ENCODE measurements at regions of chr19 and their contacts with region 1.

Region 1: DNA sequence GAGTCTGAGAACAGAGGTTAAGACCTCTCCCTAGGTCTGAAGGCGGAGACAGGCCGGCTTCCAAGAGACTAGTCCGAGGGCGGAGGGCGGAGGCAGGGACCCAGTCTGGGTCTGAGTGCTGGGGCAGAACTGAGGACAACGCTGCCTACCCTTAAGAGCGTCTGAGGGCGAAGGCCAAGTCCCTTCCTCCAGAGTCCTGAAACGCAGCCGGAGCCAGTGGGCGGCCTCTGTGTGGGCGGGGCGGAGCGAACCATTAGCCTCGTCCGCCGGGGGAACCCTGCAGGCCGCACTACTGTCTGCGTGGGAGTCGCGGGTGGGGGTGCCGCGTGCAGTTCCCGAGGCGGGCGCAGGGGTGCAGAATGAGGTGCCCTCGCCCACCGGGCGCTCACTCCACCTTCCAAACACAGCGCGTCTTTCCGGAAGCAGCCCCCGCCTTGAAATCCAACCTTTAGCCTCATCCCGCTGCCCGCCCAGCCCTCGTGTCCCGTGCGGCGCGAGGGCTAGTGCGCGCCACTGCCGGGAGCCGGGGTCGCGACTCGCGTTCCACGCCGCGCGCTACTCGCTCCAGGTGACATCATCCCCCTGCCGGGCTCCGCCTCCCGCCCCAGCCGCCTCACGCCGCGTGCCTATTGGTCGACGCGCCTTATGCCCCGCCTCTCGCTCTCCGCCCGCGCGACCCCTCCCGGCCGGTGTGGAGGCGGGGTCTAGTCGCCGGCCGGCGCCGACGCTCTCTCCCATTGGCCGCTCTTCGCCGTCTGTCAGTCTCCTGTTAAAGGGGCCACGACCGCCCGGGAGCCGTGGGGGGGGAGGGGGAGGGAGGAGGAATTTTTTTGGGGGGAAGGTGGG is at the start of gene C19orf73:
- DNase-seq: peak; percentile 95 to 99 (median 98)
- ATAC-seq: peak; percentile 92 to 93
- H3K4me3 ChIP-seq: peak within 1 kb of the TSS; percentile 66
- H3K27ac ChIP-seq: peak within 1 kb of the TSS; percentile 99
- H3K4me1 ChIP-seq: peaks cover under 1% of the 10 kb centered on the region
- H3K27me3 ChIP-seq: no peaks in the 10 kb centered on the region
- total RNA-seq, gene C19orf73: 1.2 to 2.1 (median 1.7) TPM

Region 2: DNA sequence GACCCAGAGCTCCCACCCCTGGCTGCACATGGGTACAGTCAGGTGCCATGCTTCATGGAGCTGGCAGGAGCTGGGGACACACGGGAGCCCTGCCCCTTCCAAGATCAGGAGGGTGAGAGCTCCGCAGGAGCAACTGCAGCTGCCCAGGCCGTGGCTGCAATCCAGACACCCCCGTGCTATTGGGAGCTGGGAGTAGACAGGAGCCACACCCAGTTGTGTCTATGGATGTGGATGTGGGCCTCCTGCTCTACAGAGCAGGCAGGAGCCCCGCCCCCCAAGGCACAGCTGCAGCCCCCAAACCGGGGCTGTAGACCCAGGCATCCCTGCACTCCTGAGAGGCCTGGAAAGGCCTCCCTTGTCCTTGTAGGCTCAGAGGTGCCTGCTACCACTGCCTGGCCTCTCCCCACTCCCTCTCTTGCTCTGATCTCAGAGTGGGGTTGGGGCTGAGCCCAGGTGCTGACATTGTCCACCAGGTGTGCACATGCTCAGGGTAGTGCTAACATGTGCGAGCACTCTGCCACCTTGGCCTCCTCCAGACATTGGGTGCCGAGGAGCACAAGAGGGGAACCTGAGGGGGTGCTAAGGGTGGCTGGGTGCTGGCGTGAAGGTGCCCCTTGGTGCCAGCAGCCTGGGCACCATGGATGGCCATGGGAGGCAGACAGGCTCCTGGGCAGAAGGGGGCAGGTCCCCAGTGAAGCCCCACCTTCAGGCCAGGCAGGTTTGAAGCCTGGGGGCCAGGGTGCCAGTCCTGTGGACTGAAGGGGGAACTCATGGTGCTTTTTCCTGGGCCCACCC is 172.1 kb before region 1 on chr19:
- intact Hi-C with region 1: no loop called
- DNase-seq: no peak
- ATAC-seq: peak in 1 of 2 donors; percentile 5
- H3K4me3 ChIP-seq: no peak overlapping the region
- H3K27ac ChIP-seq: no peak overlapping the region
- H3K4me1 ChIP-seq: no peaks in the 10 kb centered on the region
- H3K27me3 ChIP-seq: no peaks in the 10 kb centered on the region

Region 3: DNA sequence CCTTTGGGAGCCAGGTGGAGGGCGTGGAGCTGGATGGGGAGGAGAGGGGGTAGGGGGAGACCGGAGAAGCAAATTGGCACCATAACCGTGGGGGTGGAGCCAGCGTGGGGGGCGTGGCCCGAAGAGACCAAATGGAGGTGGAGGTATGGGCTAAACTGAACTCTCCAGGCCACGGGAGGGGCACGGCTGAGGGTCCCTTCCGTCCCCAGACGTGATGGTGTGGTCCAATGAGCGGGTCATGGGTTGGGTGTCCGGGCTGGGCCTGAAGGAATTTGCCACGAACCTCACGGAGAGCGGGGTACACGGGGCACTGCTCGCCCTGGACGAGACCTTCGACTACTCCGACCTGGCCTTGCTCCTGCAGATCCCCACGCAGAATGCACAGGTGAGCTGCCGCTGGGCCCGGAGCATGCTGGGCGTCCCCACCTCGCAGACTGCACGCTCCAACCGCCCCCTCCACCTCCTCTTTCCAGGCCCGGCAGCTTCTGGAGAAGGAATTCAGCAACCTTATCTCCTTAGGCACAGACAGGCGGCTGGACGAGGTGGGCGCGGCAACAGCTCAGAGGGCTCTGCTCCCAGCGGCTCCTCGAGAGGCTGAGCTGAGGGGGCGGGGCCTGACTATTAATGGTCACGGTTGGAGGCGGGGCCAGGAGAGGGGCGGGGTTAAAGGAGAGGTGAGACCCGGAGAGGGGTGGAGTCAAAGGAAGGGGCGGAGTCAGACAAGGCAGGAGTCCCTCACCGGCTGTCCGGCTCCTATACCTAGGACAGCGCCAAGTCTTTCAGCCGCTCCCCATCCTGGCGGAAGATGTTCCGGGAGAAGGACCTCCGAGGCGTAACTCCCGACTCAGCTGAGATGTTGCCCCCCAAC is 30.2 kb after region 1 on chr19:
- intact Hi-C with region 1: loop called in 1 of 4 experiments (anchors 5 kb)
- DNase-seq: peak; percentile 99 to 100 (median 99)
- ATAC-seq: peak; percentile 83 to 85
- H3K4me3 ChIP-seq: peak overlapping the region; percentile 66
- H3K27ac ChIP-seq: peak overlapping the region; percentile 85
- H3K4me1 ChIP-seq: peaks cover 2% of the 10 kb centered on the region
- H3K27me3 ChIP-seq: no peaks in the 10 kb centered on the region

Region 4: GRCh38 chr19:49157445-49158224 is 38.8 kb after region 1 on chr19 and contains the start of gene TRPM4:
- intact Hi-C with region 1: loop called in 2 of 4 experiments (anchors 5 kb)
- DNase-seq: peak; percentile 96 to 98 (median 98)
- ATAC-seq: peak; percentile 89
- H3K4me3 ChIP-seq: peak within 1 kb of the TSS; percentile 55
- H3K27ac ChIP-seq: peak within 1 kb of the TSS; percentile 96
- H3K4me1 ChIP-seq: peaks cover 6% of the 10 kb centered on the region
- H3K27me3 ChIP-seq: no peaks in the 10 kb centered on the region
- total RNA-seq, gene TRPM4: 28.3 to 36.4 (median 33.6) TPM